ENCODE measurements at regions of chr1 and their contacts with region 1.

Region 1: DNA sequence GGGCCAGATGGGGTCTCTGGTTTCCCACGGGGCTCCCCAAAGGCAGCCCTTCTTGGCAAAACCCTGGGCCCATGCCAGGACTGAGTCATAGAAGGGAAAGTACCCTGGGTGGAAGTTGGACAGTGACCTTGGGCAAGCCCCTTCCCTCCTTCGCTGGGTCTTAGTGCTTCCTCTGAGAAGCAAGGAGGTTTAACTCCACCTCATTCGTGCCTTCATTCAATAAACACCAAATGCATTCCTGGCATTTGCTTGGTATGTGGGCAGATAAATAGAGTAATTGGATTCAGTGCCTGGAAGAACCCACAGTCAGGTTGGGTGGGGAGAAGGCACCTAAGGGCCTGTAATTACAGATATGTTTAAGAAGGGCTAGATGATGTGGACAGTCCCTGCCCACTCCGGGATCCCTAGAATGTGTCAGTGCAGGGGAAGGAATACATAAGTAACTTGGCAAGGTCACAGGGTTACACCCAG is 36.3 kb upstream of the CITED4 start:
- DNase-seq: peak; percentile 89
- H3K4me3 Mint-ChIP-seq: peak overlapping the region; percentile 39
- H3K27ac Mint-ChIP-seq: peak overlapping the region; percentile 92
- H3K4me1 Mint-ChIP-seq: peaks cover 65% of the 10 kb centered on the region
- H3K27me3 Mint-ChIP-seq: no peaks in the 10 kb centered on the region
- CTCF ChIP-seq: no peak

Region 2: GRCh38 chr1:40877698-40878097 is 20.8 kb before region 1 on chr1:
- CTCF ChIA-PET with region 1: interaction called, 3 read pairs
- intact Hi-C with region 1: loop called (anchors 1 kb)
- DNase-seq: peak; percentile 88
- H3K4me3 Mint-ChIP-seq: no peak overlapping the region
- H3K27ac Mint-ChIP-seq: peak overlapping the region; percentile 96
- H3K4me1 Mint-ChIP-seq: peaks cover 68% of the 10 kb centered on the region
- H3K27me3 Mint-ChIP-seq: no peaks in the 10 kb centered on the region
- CTCF ChIP-seq: no peak

Region 3: DNA sequence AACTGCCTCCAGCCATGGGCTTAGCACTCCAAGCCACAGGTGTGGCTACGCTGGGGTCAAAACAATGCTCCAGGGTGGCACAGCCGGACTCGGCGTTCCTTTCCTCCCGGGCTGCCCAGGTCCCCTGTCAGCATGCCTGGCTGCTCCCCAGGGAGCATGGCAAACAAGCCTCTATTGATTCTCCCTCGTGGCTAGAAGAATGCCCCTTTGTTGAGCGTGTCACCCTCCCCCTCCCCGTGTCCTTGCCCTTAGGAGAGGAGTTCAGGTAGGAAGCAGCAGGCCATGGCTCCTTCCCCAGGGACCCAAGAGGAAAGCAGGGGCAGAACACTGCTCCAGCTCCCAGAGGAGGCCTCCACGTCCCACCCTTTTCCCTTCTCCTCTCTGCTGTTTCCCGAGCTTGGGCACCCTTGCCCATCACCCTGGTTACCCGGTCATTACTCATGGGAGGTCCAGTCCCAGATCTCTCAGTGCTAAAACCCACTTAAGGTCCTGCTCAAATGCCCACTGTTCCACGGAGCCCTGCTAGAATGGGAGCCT is 21.1 kb after region 1 on chr1:
- CTCF ChIA-PET with region 1: no interaction called
- intact Hi-C with region 1: loop called (anchors 2 kb)
- DNase-seq: peak; percentile 95
- H3K4me3 Mint-ChIP-seq: no peak overlapping the region
- H3K27ac Mint-ChIP-seq: peak overlapping the region; percentile 91
- H3K4me1 Mint-ChIP-seq: peaks cover 62% of the 10 kb centered on the region
- H3K27me3 Mint-ChIP-seq: no peaks in the 10 kb centered on the region
- CTCF ChIP-seq: no peak